Activated T-helper 2 cell treated with anti-CD3 and anti-CD28 coated beads, Interferon-gamma antibody, Interleukin-2, Interleukin-4, amounts not matched to agents 10 μg/mL and 5 μg/mL and 100 μg/mL, durations not matched to agents 14 hours and 24 hours and 36 hours (primary cell): ENCODE measurements at regions of chr10 and their contacts with region 1.

Region 1: GRCh38 chr10:101042667-101043355 is 11.8 kb downstream of the SFXN3 start:
- DNase-seq: peak; percentile 84
- H3K4me3 Mint-ChIP-seq: peak overlapping the region; percentile 81
- H3K27ac Mint-ChIP-seq: peak overlapping the region; percentile 54
- H3K4me1 Mint-ChIP-seq: peaks cover 21% of the 10 kb centered on the region
- H3K27me3 Mint-ChIP-seq: peaks cover 36% of the 10 kb centered on the region

Region 2: DNA sequence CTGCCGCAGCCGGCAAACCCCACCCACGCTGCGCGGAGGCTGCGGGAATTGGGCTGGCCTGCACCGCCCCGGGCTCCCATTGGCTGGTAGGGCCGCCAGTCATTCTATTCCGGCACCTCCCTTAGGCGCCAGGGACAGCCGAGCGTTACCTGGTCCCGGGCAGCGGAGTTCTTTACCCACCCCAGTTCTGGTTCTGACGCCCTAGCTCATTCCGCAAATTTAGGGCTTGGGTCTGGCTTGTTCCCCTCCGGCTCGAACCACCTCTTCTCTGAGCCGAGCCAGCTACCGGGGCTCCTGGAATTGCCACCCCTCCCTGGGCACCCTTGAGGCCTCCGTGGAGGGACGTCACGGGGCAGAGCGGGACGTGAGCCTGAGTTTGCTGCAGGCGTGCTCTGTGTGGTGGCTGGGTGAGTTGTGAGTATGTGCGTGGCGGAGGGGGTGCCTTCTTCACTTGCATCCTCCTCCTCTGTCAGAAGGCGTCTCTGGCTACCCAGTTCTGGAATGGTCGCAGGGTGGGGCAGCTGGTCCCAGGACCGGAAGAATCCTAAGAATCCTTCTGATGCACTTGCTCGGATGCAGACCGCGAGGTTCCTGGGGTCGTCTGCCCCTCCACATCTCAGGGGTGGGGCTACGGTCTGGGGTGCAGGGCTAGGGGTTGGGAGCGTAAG is 11.5 kb before region 1 on chr10 and contains the starts of genes PDZD7 and SFXN3:
- intact Hi-C with region 1: loop called (anchors 1 kb)
- DNase-seq: peak; percentile 94
- H3K4me3 Mint-ChIP-seq: peak within 1 kb of the TSS; percentile 85
- H3K27ac Mint-ChIP-seq: peak within 1 kb of the TSS; percentile 94
- H3K4me1 Mint-ChIP-seq: peaks cover 15% of the 10 kb centered on the region
- H3K27me3 Mint-ChIP-seq: peaks cover 21% of the 10 kb centered on the region
- total RNA-seq, gene PDZD7: 0.53 and 0.64 TPM in 2 replicates
- total RNA-seq, gene SFXN3: 41.3 and 44.3 TPM in 2 replicates

Region 3: GRCh38 chr10:101060036-101060950 is 17.5 kb after region 1 on chr10:
- intact Hi-C with region 1: loop called (anchors 1 kb)
- DNase-seq: peak; percentile 87
- H3K4me3 Mint-ChIP-seq: peak overlapping the region; percentile 95
- H3K27ac Mint-ChIP-seq: peak overlapping the region; percentile 85
- H3K4me1 Mint-ChIP-seq: peaks cover 27% of the 10 kb centered on the region
- H3K27me3 Mint-ChIP-seq: peaks cover 23% of the 10 kb centered on the region

Region 4: DNA sequence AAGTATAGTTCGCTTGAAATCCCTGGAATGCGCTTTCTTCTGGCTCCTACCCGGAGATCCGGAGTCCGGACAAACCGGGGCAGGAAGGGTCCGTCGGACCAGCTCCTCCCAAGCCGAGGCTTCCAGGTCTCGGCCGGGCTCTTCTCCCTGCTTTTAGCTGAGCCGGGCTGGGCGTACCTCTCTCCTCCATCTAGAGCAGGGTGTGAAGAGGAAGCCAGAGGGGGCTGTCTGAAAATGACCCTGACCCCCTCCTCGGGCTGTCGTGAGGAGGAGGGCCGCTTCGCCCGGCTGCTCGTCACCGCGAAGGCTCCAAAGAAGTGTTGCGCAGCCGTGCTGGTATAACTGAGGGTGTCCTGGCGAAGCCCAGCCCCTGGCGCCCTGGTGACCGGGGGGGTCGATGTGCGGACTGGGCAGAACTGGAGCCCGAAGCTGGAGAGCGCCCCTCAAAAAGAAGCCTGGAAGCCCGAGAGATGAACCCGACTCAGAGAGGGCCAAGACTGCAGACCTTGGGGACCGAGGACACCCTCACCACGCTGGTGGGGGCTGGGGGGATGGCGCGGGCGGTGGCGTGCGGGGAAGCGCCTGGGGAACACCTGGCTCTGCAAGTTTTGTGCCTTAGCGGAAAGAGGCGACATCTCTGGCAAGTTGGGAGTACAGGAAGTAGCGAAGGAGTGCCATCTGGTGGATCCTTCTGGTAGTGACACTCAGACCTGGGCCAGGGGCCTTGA is 24.7 kb after region 1 on chr10:
- intact Hi-C with region 1: loop called (anchors 1 kb)
- DNase-seq: peak; percentile 65
- H3K4me3 Mint-ChIP-seq: peak overlapping the region; percentile 79
- H3K27ac Mint-ChIP-seq: no peak overlapping the region
- H3K4me1 Mint-ChIP-seq: peaks cover 15% of the 10 kb centered on the region
- H3K27me3 Mint-ChIP-seq: peaks cover 54% of the 10 kb centered on the region

Region 5: GRCh38 chr10:101238732-101239105 is 195.9 kb after region 1 on chr10:
- intact Hi-C with region 1: loop called (anchors 10 kb)
- DNase-seq: no peak
- H3K4me3 Mint-ChIP-seq: no peak overlapping the region
- H3K27ac Mint-ChIP-seq: no peak overlapping the region
- H3K4me1 Mint-ChIP-seq: peaks cover 5% of the 10 kb centered on the region
- H3K27me3 Mint-ChIP-seq: peaks cover 64% of the 10 kb centered on the region